Activated naive CD8-positive, alpha-beta T cell treated with anti-CD3 and anti-CD28 coated beads, Interleukin-2, amount 10 ng/mL, durations not matched to agents 7 days and 5 days (primary cell): ENCODE measurements at regions of chr9 and their contacts with region 1.

Region 1: GRCh38 chr9:35646533-35647265 is 4.0 kb downstream of the SIT1 start:
- DNase-seq: peak; percentile 98
- ATAC-seq: peak; percentile 83
- H3K4me3 Mint-ChIP-seq: peak overlapping the region; percentile 87
- H3K27ac Mint-ChIP-seq: peak overlapping the region; percentile 90
- H3K4me1 Mint-ChIP-seq: peaks cover 42% of the 10 kb centered on the region
- H3K27me3 Mint-ChIP-seq: no peaks in the 10 kb centered on the region

Region 2: GRCh38 chr9:35436933-35437332 is 209.8 kb before region 1 on chr9:
- POLR2A ChIA-PET with region 1: no interaction called
- DNase-seq: no peak
- ATAC-seq: no peak
- H3K4me3 Mint-ChIP-seq: no peak overlapping the region
- H3K27ac Mint-ChIP-seq: no peak overlapping the region
- H3K4me1 Mint-ChIP-seq: peaks cover 4% of the 10 kb centered on the region
- H3K27me3 Mint-ChIP-seq: peaks cover 20% of the 10 kb centered on the region

Region 3: DNA sequence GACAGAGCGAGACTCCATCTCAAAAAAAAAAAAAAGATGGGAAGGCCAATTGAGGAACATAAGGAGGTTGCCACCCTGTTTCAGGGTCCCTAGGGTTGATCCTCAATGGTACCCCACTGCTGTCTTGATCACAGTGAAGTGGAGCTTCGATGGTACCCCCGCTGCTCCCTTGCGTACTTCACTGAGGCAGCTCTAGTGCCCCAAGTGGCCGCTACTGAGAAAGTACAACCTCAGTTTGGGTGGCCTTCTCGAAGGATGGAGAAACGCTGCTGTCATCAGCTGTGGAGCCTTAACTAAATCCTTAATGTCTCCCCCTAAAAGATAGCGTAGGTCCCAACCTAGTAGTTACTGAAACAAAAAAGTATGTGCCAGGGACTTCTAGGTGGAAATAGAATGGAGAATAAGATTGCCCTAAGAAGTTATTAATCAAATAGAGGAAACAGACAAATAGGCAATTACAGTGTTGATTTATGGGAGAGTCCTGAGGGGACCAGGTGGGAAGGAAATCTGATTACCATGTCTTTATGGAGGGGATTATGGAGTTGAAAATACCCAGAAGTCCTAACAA is 35.4 kb before region 1 on chr9:
- POLR2A ChIA-PET with region 1: interaction called, 166 read pairs
- DNase-seq: no peak
- ATAC-seq: peak; percentile 84
- H3K4me3 Mint-ChIP-seq: no peak overlapping the region
- H3K27ac Mint-ChIP-seq: no peak overlapping the region
- H3K4me1 Mint-ChIP-seq: peaks cover 23% of the 10 kb centered on the region
- H3K27me3 Mint-ChIP-seq: no peaks in the 10 kb centered on the region

Region 4: DNA sequence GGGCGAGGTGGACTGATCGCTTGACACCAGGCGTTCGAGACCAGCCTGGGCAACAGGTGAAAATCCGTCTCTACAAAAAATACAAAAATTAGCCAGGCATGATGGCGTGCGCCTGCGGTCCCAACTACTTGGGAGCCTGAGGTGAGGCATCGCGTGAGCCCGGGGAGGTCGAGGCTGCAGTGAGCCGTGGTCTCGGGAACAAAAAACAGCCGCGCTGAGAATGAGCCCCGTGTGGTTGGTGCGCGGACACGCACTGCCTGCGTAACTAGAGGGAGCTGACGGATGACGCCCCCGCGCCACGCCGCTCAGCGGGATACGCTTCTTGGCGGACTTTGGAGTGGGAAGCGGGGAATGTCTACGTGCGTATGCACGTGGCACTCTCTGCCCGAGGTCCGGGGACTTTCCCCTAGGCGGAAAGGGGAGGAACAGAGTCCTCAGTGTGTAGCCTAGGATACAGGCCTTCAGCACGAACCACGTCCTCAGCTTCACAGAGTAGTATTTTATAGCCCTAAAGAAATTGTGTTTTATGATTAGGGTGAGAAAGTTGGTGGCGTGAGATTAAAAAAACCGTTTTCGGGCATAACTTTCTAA is 10.9 kb after region 1 on chr9 and contains the start of gene RMRP:
- POLR2A ChIA-PET with region 1: interaction called, 214 read pairs
- DNase-seq: peak; percentile 84
- ATAC-seq: peak; percentile 90
- H3K4me3 Mint-ChIP-seq: peak within 1 kb of the TSS; percentile 92
- H3K27ac Mint-ChIP-seq: peak within 1 kb of the TSS; percentile 98
- H3K4me1 Mint-ChIP-seq: peaks cover 57% of the 10 kb centered on the region
- H3K27me3 Mint-ChIP-seq: no peaks in the 10 kb centered on the region
- total RNA-seq, gene RMRP: 10,447 to 10,452 TPM

Region 5: DNA sequence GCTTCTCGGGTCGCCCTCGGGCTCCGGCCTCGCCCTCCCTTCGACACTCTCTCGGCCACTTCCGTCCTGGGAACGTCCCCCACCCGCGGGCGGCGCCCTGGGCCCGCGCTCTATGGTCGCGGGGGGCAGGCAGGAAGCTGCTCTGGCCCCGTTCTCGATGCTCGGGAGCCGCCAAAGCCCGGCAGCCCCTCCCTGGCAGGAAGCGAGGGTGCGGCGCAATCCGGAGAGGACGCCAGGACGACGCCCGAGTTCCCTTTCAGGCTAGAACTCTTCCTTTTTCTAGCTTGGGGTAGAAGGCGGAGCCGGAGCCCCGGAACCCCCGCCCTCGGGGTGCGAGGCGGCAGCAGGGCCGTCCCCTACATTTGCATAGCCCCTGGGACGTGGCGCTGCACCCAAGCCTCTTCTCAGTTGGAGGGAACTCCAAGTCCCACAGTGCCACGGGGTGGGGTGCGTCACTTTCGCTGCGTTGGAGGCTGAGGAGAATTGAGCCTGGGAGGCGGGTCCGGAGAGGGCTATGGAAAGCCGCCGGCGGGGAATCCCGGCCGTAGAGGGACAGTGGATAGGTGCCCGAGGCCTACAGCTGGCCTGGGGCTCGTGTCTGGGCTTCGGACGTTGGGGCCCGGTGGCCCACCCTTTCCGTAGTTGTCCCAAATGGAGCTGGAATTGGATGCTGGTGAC is 85.6 kb after region 1 on chr9 and contains the starts of genes CREB3 and TLN1:
- POLR2A ChIA-PET with region 1: interaction called, 23 read pairs
- DNase-seq: peak; percentile 95
- ATAC-seq: peak; percentile 91
- H3K4me3 Mint-ChIP-seq: no peak within 1 kb of the TSS
- H3K27ac Mint-ChIP-seq: peak within 1 kb of the TSS; percentile 92
- H3K4me1 Mint-ChIP-seq: peaks cover 14% of the 10 kb centered on the region
- H3K27me3 Mint-ChIP-seq: no peaks in the 10 kb centered on the region
- total RNA-seq, gene CREB3: 21.1 to 24.1 TPM
- total RNA-seq, gene TLN1: 381 to 388 TPM